GM12878 (cell line): ENCODE measurements at regions of chr9 and their contacts with region 1.

Region 1: GRCh38 chr9:34376596-34377403 is at the start of gene MYORG:
- DNase-seq: peak; percentile 82
- ATAC-seq: peak; percentile 88
- H3K4me3 ChIP-seq: peak within 1 kb of the TSS; percentile 68
- H3K27ac ChIP-seq: no peak within 1 kb of the TSS
- H3K4me1 ChIP-seq: peaks cover 21% of the 10 kb centered on the region
- H3K27me3 ChIP-seq: peaks cover 5 to 9% of the 10 kb centered on the region in 2 experiments; a peak in 3 of 4 replicates
- CTCF ChIP-seq: no peak
- EP300 ChIP-seq: no peak
- POLR2A ChIP-seq: peak; percentile 65
- RAD21 ChIP-seq: no peak
- polyA plus RNA-seq, gene MYORG: 0.06 to 0.07 TPM

Region 2: DNA sequence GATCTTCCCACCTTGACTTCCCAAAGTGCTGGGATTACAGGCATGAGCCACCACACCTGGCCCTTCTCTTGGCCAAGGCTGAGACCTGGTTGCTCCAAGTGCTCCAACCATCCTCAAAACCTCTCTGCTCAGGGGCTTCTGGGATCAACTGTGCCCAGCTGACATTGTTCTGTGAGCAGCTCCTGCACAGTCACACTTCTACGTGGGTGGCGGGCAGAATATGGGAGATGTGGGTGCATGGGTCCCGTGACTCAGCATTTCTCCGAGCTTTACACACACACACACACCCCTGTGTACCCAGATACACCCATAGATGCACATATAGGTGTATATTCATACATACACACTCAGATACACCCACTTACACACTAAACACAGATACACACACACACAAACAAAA is 10.4 kb after region 1 on chr9:
- CTCF ChIA-PET with region 1: interaction called, 10 read pairs
- POLR2A ChIA-PET with region 1: no interaction called
- RAD21 ChIA-PET with region 1: interaction called, 4 read pairs
- SMC1A ChIA-PET with region 1: no interaction called
- in situ Hi-C with region 1: no loop called
- intact Hi-C with region 1: no loop called
- DNase-seq: no peak
- ATAC-seq: no peak
- H3K4me3 ChIP-seq: no peak overlapping the region
- H3K27ac ChIP-seq: no peak overlapping the region
- H3K4me1 ChIP-seq: no peaks in the 10 kb centered on the region
- H3K27me3 ChIP-seq: peaks cover 0 to 4% of the 10 kb centered on the region in 2 experiments; a peak in 3 of 4 replicates
- CTCF ChIP-seq: no peak
- EP300 ChIP-seq: no peak
- POLR2A ChIP-seq: no peak
- RAD21 ChIP-seq: no peak

Region 3: GRCh38 chr9:34522971-34523797 is 146.4 kb after region 1 on chr9 and contains the start of gene ENHO:
- CTCF ChIA-PET with region 1: no interaction called
- POLR2A ChIA-PET with region 1: no interaction called
- RAD21 ChIA-PET with region 1: no interaction called
- SMC1A ChIA-PET with region 1: no interaction called
- in situ Hi-C with region 1: no loop called
- intact Hi-C with region 1: no loop called
- DNase-seq: no peak
- ATAC-seq: peak; percentile 93
- H3K4me3 ChIP-seq: no peak within 1 kb of the TSS
- H3K27ac ChIP-seq: no peak within 1 kb of the TSS
- H3K4me1 ChIP-seq: no peaks in the 10 kb centered on the region
- H3K27me3 ChIP-seq: peaks cover 9 to 11% of the 10 kb centered on the region in 2 experiments; a peak in 3 of 4 replicates
- CTCF ChIP-seq: no peak
- EP300 ChIP-seq: no peak
- POLR2A ChIP-seq: no peak
- RAD21 ChIP-seq: no peak
- polyA plus RNA-seq, gene ENHO: not detected

Region 4: DNA sequence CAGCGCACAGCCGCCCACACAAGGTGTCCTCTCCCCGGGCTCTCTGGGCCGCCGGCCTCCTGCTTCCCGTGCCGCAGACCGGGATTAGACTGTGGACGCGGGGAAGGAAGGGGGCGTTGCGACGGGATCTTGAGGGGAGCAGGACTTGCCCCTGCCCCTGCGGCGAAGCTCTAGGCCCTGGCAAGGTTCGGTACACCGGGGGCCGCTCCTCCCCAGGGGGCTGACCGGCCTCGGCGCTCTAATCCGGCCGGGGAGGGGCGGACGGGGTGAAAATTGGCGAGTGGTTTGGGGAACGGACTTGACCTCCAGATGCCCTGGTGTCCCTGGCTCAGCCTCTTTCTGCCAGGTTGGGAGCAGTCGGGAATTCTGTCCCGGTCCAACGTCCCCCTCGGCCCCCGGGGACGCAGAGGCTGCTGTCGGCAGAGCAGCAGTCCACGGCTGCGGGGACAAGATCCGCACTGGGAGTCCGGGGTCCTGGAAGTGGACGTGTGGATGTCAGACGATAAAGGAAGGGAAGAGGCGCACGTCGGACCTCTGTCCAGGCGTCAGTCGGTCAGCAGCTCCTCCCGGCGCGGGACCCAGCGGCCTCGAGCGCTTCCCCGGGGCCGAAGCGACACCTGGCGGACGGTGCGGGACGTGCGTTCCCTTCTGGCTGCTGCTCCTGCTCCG is 214.6 kb after region 1 on chr9:
- CTCF ChIA-PET with region 1: no interaction called
- POLR2A ChIA-PET with region 1: no interaction called
- RAD21 ChIA-PET with region 1: no interaction called
- SMC1A ChIA-PET with region 1: no interaction called
- in situ Hi-C with region 1: no loop called
- intact Hi-C with region 1: no loop called
- DNase-seq: no peak
- ATAC-seq: peak; percentile 97
- H3K4me3 ChIP-seq: no peak overlapping the region
- H3K27ac ChIP-seq: no peak overlapping the region
- H3K4me1 ChIP-seq: peaks cover 2% of the 10 kb centered on the region; the same call in 1 of the 2 replicates
- H3K27me3 ChIP-seq: peaks cover 28 to 50% of the 10 kb centered on the region in 2 experiments
- CTCF ChIP-seq: peak; percentile 75 to 94 (median 87)
- EP300 ChIP-seq: no peak
- POLR2A ChIP-seq: no peak
- RAD21 ChIP-seq: peak; percentile 66